ENCODE measurements at regions of chr17 and their contacts with region 1.

Region 1: DNA sequence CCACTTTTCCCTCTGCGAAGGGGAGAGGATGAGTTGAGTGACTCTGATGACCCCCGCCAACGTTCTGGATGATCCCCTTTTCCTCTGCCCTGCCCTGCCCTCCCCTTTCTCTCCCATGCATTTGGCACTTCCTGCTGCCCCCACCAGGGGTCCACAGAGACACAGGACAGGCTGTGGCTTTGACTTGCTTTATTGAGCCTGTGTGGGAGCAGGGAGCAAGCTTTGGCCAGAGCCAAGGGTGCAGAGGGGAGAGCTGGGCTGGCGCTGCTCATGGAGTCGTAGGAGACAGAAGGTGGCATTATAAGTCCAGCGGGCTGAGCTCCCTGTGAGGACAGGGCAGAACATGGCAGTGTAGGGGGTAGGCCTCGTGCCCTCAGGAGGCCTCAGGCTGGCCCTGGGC is 1.6 kb downstream of the PPY start:
- DNase-seq: peak; percentile 43
- ATAC-seq: no peak
- H3K4me3 Mint-ChIP-seq: no peak overlapping the region
- H3K27ac Mint-ChIP-seq: no peak overlapping the region
- H3K4me1 Mint-ChIP-seq: peaks cover 10% of the 10 kb centered on the region
- H3K27me3 Mint-ChIP-seq: peaks cover 9% of the 10 kb centered on the region

Region 2: DNA sequence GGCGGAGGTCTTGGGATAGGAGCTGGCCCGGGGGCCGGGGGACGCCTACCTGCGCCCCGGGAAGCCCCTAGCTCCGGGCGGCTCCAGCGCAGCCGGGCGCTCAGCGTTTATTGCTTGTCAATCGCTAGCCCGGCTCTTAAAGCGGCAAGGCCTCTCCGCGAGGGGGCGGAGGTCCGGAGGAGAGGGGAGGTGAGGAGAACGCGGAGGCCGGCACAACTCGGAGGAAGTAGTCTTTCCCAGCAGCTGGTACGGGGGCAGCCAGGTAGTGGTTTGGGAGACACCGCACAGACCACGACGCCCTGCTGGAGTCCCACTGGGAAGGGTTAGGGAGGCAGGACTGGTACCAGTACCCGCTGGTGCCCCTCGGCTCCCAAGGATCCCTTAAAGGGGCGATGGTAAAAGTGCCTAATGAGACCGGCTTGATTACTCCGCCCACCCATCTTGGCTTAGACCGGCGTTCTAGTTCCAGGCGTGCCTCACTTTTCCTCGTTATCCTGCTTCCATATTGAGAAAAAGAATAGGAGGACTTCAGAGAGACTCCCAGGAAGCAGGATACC is 33.1 kb before region 1 on chr17 and contains the start of gene MPP2:
- CTCF ChIA-PET with region 1: interaction called, 20 read pairs
- POLR2A ChIA-PET with region 1: no interaction called
- intact Hi-C with region 1: no loop called
- DNase-seq: peak; percentile 75
- ATAC-seq: peak; percentile 49
- H3K4me3 Mint-ChIP-seq: peak within 1 kb of the TSS; percentile 34
- H3K27ac Mint-ChIP-seq: no peak within 1 kb of the TSS
- H3K4me1 Mint-ChIP-seq: peaks cover 17% of the 10 kb centered on the region
- H3K27me3 Mint-ChIP-seq: peaks cover 25% of the 10 kb centered on the region
- total RNA-seq, gene MPP2: 1.2 to 1.3 TPM

Region 3: GRCh38 chr17:43994272-43995149 is 53.9 kb after region 1 on chr17:
- CTCF ChIA-PET with region 1: interaction called, 59 read pairs
- POLR2A ChIA-PET with region 1: no interaction called
- intact Hi-C with region 1: loop called (anchors 1 kb)
- DNase-seq: peak; percentile 83
- ATAC-seq: peak; percentile 94
- H3K4me3 Mint-ChIP-seq: no peak overlapping the region
- H3K27ac Mint-ChIP-seq: peak overlapping the region; percentile 19
- H3K4me1 Mint-ChIP-seq: no peaks in the 10 kb centered on the region
- H3K27me3 Mint-ChIP-seq: peaks cover 20% of the 10 kb centered on the region

Region 4: GRCh38 chr17:44006598-44007345 is 66.1 kb after region 1 on chr17:
- CTCF ChIA-PET with region 1: interaction called, 13 read pairs
- POLR2A ChIA-PET with region 1: no interaction called
- intact Hi-C with region 1: no loop called
- DNase-seq: peak; percentile 99
- ATAC-seq: peak; percentile 84
- H3K4me3 Mint-ChIP-seq: peak overlapping the region; percentile 78
- H3K27ac Mint-ChIP-seq: peak overlapping the region; percentile 86
- H3K4me1 Mint-ChIP-seq: peaks cover 20% of the 10 kb centered on the region
- H3K27me3 Mint-ChIP-seq: peaks cover 17% of the 10 kb centered on the region

Region 5: DNA sequence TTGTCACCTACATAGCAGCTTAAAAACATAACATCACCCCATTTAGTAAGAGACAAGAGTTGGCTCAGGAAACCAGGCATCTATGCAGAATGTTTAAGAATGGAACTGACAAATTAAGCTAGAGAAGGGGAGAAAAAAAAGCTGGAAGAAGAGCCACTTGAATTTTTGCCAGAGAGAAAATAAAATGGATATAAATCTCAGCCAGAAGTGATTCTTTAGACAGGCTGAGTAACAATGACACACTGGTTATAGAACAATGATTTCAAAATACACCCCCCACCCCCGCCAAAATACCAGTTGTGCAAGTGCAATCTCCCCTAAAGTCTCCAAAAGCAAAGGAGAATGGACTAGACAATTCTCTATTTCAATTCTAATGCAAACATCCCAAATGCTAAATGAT is 103.4 kb after region 1 on chr17:
- CTCF ChIA-PET with region 1: interaction called, 25 read pairs
- POLR2A ChIA-PET with region 1: no interaction called
- intact Hi-C with region 1: loop called (anchors 1 kb)
- DNase-seq: no peak
- ATAC-seq: no peak
- H3K4me3 Mint-ChIP-seq: no peak overlapping the region
- H3K27ac Mint-ChIP-seq: no peak overlapping the region
- H3K4me1 Mint-ChIP-seq: peaks cover 9% of the 10 kb centered on the region
- H3K27me3 Mint-ChIP-seq: no peaks in the 10 kb centered on the region

Region 6: GRCh38 chr17:44170499-44171201 is 230.0 kb after region 1 on chr17 and contains the start of gene ASB16:
- CTCF ChIA-PET with region 1: interaction called, 8 read pairs
- POLR2A ChIA-PET with region 1: no interaction called
- intact Hi-C with region 1: loop called in 1 of 2 experiments (anchors 1 kb)
- DNase-seq: no peak
- ATAC-seq: no peak
- H3K4me3 Mint-ChIP-seq: no peak within 1 kb of the TSS
- H3K27ac Mint-ChIP-seq: no peak within 1 kb of the TSS
- H3K4me1 Mint-ChIP-seq: peaks cover 8% of the 10 kb centered on the region
- H3K27me3 Mint-ChIP-seq: no peaks in the 10 kb centered on the region
- total RNA-seq, gene ASB16: 0.14 TPM

Measured in activated CD4-positive, alpha-beta T cell treated with anti-CD3 and anti-CD28 coated beads for 36 hours (primary cell).